AG04449 (cell line): ENCODE measurements at regions of chrX and their contacts with region 1.

Region 1: DNA sequence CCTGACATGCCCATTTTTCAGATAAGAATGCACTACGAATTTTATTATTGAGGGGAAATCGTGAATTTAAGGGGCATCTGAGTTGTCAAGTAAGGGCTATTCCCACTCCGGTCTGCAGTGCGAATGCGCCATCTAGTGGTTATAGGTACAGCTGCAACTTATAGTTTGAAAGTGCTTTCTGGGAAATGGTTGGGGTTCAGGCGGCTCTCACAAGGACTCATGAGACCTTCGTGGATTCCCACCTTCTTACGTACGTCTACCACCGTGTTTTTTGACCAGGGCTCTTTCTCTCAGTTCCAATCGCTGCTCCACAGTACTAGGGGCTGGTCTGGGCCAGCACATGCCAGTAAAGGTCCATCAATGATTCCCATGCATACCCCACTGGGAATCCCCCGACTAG is 12.3 kb downstream of the MSL3 start:
- DNase-seq: no peak
- H3K4me3 ChIP-seq: no peak overlapping the region
- CTCF ChIP-seq: peak; percentile 71

Region 2: DNA sequence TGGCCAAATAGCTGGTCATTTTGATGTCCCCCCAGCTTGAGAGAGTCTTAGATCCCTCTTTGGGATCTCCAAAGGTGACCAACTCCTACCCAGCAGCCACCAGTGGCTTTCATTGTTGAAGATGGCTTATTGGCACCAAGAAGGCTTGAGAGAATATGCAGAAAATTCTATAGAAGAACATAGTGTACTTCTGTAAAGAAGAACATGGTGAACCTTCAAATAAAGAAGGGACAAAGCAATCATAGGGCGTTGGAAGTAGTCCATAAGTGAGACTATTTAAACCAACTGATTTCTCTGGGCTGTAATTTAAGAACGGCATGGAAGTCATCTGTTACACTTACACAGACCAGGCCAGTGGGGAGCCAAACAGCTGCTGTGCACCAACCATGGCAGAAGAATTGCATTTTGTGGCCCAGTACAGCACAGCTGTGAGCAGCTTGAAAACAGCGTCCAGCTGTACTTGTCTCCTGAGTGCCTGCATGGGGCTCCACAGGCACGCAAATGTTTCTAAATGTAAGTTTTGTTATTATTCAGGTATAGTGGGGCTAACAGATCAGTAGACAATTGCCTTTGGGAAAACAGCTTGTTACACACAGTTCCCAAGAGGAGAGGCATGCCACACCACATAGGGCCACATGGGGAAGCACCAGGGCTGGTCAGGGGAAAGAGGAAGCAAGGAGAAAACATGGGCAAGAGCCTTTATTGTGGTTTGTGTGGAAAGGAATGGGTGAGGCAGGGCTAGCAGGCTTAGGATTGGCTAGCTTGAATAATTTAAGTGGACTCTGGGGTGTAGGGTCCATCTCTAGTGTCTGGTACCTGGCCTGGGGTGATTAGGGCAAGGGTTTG is 229.6 kb before region 1 on chrX:
- CTCF ChIA-PET with region 1: interaction called, 12 read pairs
- POLR2A ChIA-PET with region 1: no interaction called
- DNase-seq: no peak
- H3K4me3 ChIP-seq: no peak overlapping the region
- CTCF ChIP-seq: peak; percentile 9

Region 3: GRCh38 chrX:11724122-11725017 is 46.0 kb before region 1 on chrX:
- CTCF ChIA-PET with region 1: interaction called, 12 read pairs
- POLR2A ChIA-PET with region 1: no interaction called
- DNase-seq: no peak
- H3K4me3 ChIP-seq: no peak overlapping the region
- CTCF ChIP-seq: peak; percentile 42

Region 4: GRCh38 chrX:11758400-11759171 is 11.7 kb before region 1 on chrX:
- CTCF ChIA-PET with region 1: interaction called, 13 read pairs
- POLR2A ChIA-PET with region 1: no interaction called
- DNase-seq: no peak
- H3K4me3 ChIP-seq: peak overlapping the region; percentile 78
- CTCF ChIP-seq: peak; percentile 54

Region 5: DNA sequence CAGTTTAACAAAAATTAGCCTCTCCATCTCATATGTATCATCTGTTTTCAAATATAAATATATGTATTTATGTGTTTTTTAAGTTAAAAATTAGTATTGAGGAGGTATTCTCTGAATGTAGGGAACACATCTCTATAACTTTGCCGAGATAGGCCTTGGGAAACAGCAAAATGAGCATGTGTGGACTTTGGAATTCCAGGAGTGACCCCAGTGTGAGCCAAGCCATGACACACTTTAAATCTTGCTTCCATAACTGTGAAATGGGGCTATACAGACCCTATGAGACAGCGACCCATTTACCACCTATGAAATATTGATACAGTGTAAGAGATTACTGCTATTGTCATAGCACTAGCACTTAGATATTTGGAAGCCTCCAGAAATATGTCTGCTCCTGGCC is 426.7 kb after region 1 on chrX:
- CTCF ChIA-PET with region 1: no interaction called
- POLR2A ChIA-PET with region 1: no interaction called
- DNase-seq: no peak
- H3K4me3 ChIP-seq: no peak overlapping the region
- CTCF ChIP-seq: no peak